ENCODE measurements at regions of chr2 and their contacts with region 1.

Region 1: DNA sequence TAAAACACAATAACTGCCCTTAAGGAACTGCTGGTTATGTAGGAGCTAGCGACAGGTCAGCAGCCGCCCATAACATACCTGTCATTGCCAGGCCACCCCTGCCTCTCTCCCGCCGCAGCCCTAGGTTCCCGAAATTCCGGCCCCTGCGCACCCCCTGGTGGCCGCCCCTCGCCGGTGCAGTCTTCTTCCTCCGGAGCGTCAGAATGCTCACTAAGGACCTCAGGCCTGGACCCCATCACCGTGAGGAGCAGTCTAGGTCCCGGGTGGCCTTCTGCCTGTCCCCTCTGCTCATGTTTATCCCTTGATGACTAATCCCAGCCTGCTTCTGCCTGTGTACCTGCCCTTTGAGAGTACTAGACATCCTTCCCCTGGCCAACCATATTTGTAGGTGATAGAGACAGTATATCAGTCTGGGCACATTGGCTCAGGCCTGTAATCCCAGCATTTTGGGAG is 115.7 kb upstream of the SLC1A4 start:
- DNase-seq: peak; percentile 86
- ATAC-seq: peak; percentile 99
- H3K4me3 Mint-ChIP-seq: peak overlapping the region; percentile 52
- H3K27ac Mint-ChIP-seq: no peak overlapping the region
- H3K4me1 Mint-ChIP-seq: peaks cover 8% of the 10 kb centered on the region
- H3K27me3 Mint-ChIP-seq: no peaks in the 10 kb centered on the region
- CTCF ChIP-seq: peak; percentile 90

Region 2: GRCh38 chr2:64040161-64040560 is 833.3 kb before region 1 on chr2:
- CTCF ChIA-PET with region 1: no interaction called
- POLR2A ChIA-PET with region 1: no interaction called
- intact Hi-C with region 1: loop called (anchors 10 kb)
- DNase-seq: no peak
- ATAC-seq: no peak
- H3K4me3 Mint-ChIP-seq: no peak overlapping the region
- H3K27ac Mint-ChIP-seq: no peak overlapping the region
- H3K4me1 Mint-ChIP-seq: peaks cover 16% of the 10 kb centered on the region
- H3K27me3 Mint-ChIP-seq: no peaks in the 10 kb centered on the region
- CTCF ChIP-seq: no peak

Region 3: GRCh38 chr2:64514008-64514407 is 359.5 kb before region 1 on chr2:
- CTCF ChIA-PET with region 1: no interaction called
- POLR2A ChIA-PET with region 1: no interaction called
- intact Hi-C with region 1: no loop called
- DNase-seq: no peak
- ATAC-seq: no peak
- H3K4me3 Mint-ChIP-seq: no peak overlapping the region
- H3K27ac Mint-ChIP-seq: no peak overlapping the region
- H3K4me1 Mint-ChIP-seq: no peaks in the 10 kb centered on the region
- H3K27me3 Mint-ChIP-seq: no peaks in the 10 kb centered on the region
- CTCF ChIP-seq: no peak